Caco-2 (cell line): ENCODE measurements at regions of chr10 and their contacts with region 1.

Region 1: GRCh38 chr10:4656576-4657182 is 169.3 kb upstream of the AKR1E2 start:
- DNase-seq: peak; percentile 53 to 71
- H3K4me3 ChIP-seq: no peak overlapping the region
- H3K4me3 Mint-ChIP-seq: no peak overlapping the region
- H3K27ac Mint-ChIP-seq: no peak overlapping the region
- H3K4me1 ChIP-seq: peaks cover 2% of the 10 kb centered on the region
- H3K4me1 Mint-ChIP-seq: peaks cover 2% of the 10 kb centered on the region
- H3K27me3 ChIP-seq: no peaks in the 10 kb centered on the region; the same call in 1 of the 2 replicates
- H3K27me3 Mint-ChIP-seq: peaks cover 5% of the 10 kb centered on the region
- CTCF ChIP-seq: peak; percentile 92 to 94

Region 2: DNA sequence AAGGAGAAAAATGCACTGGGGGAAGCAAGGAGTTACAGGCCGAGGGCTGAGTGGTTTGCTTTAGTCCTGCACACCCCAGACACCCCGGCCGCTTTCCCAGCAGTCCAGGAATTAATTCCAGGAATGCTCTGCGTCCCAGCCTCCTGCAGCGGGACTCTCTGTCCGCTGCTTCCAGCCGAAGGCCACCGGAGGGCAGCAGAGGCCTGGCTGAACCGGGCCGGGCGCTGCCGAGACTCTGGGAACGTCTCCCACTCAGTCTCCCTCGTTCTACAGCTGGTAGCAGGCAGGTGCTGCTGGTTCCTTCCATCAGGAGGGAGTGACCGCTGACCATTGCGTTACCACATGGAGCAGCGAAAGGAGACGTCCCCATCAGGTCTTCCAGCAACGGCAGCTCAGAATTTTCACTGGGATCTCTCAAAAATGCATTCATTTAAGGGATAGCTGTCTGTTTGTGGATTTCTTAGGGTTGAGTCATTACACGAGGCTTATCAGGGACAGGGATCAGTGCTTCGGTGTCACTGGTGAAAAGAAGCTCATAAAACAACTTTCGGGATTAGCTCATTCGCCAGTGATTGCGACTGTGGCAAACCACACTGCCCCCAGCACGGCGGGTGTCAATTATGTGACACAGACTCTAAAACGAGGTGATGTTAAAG is 1459.2 kb before region 1 on chr10:
- CTCF ChIA-PET with region 1: interaction called, 5 read pairs
- POLR2A ChIA-PET with region 1: no interaction called
- intact Hi-C with region 1: loop called (anchors 1 kb)
- DNase-seq: peak; percentile 89 to 92
- H3K4me3 ChIP-seq: peak overlapping the region; percentile 9
- H3K4me3 Mint-ChIP-seq: peak overlapping the region; percentile 75
- H3K27ac Mint-ChIP-seq: peak overlapping the region; percentile 66
- H3K4me1 ChIP-seq: no peaks in the 10 kb centered on the region
- H3K4me1 Mint-ChIP-seq: peaks cover 9% of the 10 kb centered on the region
- H3K27me3 ChIP-seq: no peaks in the 10 kb centered on the region; the same call in 1 of the 2 replicates
- H3K27me3 Mint-ChIP-seq: peaks cover 6% of the 10 kb centered on the region
- CTCF ChIP-seq: peak; percentile 92 to 99

Region 3: DNA sequence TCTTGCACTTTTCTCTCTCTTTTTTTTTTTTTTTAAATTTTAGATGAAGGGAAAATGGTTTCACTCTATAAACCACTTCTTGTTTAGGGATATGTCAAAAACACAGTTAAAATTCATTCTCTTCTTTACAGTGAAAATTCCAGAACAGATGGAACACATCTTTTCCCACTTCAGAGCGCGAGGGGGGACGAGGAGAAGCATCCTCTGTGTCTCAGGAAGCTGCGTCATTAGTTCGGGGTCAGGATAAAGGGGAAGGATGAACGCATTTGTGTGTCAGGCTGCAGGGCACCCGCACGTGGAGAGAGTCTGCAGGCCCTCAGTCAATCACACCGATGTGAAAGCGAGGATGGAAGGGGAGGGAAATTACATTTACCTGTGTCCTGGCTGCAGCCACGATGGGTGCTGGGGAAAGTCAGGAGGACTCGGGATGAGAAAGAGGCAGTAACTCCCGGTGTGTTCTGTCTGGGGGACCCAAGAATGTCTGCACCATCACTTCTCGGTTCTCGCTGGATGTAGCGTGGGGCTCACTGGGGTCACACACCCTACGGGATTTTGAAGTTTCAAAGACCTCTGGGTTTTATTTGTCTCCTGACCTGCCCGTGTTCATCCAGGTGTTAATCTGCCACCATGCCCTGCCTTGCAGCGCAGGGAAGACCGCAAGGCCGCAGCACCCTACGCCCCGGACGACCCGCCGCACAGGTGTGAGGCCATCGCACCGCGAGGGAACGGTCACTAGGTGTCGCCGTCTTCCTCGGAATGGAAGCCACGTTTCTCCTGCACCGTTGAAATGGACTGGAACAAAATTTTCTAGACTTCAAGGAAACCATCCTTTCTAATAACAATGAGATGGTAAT is 1417.4 kb before region 1 on chr10:
- CTCF ChIA-PET with region 1: no interaction called
- POLR2A ChIA-PET with region 1: no interaction called
- intact Hi-C with region 1: loop called (anchors 1 kb)
- DNase-seq: peak; percentile 75 to 86
- H3K4me3 ChIP-seq: no peak overlapping the region
- H3K4me3 Mint-ChIP-seq: no peak overlapping the region
- H3K27ac Mint-ChIP-seq: no peak overlapping the region
- H3K4me1 ChIP-seq: no peaks in the 10 kb centered on the region
- H3K4me1 Mint-ChIP-seq: no peaks in the 10 kb centered on the region
- H3K27me3 ChIP-seq: no peaks in the 10 kb centered on the region
- H3K27me3 Mint-ChIP-seq: peaks cover 6% of the 10 kb centered on the region
- CTCF ChIP-seq: peak; percentile 96 to 99

Region 4: GRCh38 chr10:4391683-4392082 is 265.0 kb before region 1 on chr10:
- CTCF ChIA-PET with region 1: no interaction called
- POLR2A ChIA-PET with region 1: no interaction called
- intact Hi-C with region 1: loop called (anchors 1 kb)
- DNase-seq: peak in 1 of 2 experiments; percentile 25
- H3K4me3 ChIP-seq: no peak overlapping the region
- H3K4me3 Mint-ChIP-seq: no peak overlapping the region
- H3K27ac Mint-ChIP-seq: no peak overlapping the region
- H3K4me1 ChIP-seq: no peaks in the 10 kb centered on the region
- H3K4me1 Mint-ChIP-seq: no peaks in the 10 kb centered on the region
- H3K27me3 ChIP-seq: no peaks in the 10 kb centered on the region
- H3K27me3 Mint-ChIP-seq: peaks cover 14% of the 10 kb centered on the region
- CTCF ChIP-seq: peak in 1 of 2 experiments; percentile 25

Region 5: DNA sequence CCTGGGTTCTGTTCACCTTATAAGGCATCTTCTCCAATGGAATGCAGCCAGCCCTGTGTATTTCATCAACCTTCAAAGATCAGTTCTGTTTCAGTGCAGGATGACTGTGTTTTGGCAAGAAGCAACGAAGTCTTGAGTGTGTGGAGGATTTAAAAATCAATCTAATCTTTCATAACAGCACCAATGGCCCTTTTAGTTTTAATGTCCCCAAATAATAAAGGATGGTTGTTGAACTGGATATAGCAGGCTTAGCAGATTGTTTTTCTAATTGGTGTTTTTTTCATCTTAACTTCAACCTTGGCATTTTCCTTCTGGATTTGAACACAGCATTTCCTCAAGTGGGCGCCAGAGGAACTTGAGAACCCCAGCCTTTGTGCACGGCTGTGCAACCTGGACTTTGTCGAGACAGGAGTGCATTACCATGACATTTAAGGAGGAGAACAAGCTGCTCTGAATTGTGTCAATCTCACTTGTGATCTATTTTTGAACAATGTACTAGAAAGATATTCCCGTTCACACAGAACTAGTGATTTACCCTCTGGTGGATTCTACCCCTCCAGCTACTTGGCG is 143.9 kb before region 1 on chr10:
- CTCF ChIA-PET with region 1: no interaction called
- POLR2A ChIA-PET with region 1: no interaction called
- intact Hi-C with region 1: loop called (anchors 2 kb)
- DNase-seq: peak; percentile 48 to 58
- H3K4me3 ChIP-seq: no peak overlapping the region
- H3K4me3 Mint-ChIP-seq: no peak overlapping the region
- H3K27ac Mint-ChIP-seq: no peak overlapping the region
- H3K4me1 ChIP-seq: no peaks in the 10 kb centered on the region
- H3K4me1 Mint-ChIP-seq: no peaks in the 10 kb centered on the region
- H3K27me3 ChIP-seq: no peaks in the 10 kb centered on the region
- H3K27me3 Mint-ChIP-seq: peaks cover 16% of the 10 kb centered on the region
- CTCF ChIP-seq: peak; percentile 54 to 73